MCF 10A (cell line): ENCODE measurements at regions of chr17 and their contacts with region 1.

Region 1: GRCh38 chr17:81034779-81035388 is at the start of gene BAIAP2:
- DNase-seq: peak; percentile 93
- H3K4me3 Mint-ChIP-seq: peak within 1 kb of the TSS; percentile 82
- H3K27ac Mint-ChIP-seq: peak within 1 kb of the TSS; percentile 79
- H3K4me1 Mint-ChIP-seq: peaks cover 36% of the 10 kb centered on the region
- H3K27me3 Mint-ChIP-seq: no peaks in the 10 kb centered on the region
- CTCF ChIP-seq: no peak
- total RNA-seq, gene BAIAP2: 46.4 and 67.0 TPM in 2 replicates

Region 2: GRCh38 chr17:81018044-81018802 is 16.7 kb before region 1 on chr17:
- CTCF ChIA-PET with region 1: interaction called, 20 read pairs
- POLR2A ChIA-PET with region 1: interaction called, 7 read pairs
- intact Hi-C with region 1: no loop called
- DNase-seq: no peak
- H3K4me3 Mint-ChIP-seq: no peak overlapping the region
- H3K27ac Mint-ChIP-seq: no peak overlapping the region
- H3K4me1 Mint-ChIP-seq: no peaks in the 10 kb centered on the region
- H3K27me3 Mint-ChIP-seq: no peaks in the 10 kb centered on the region
- CTCF ChIP-seq: no peak

Region 3: DNA sequence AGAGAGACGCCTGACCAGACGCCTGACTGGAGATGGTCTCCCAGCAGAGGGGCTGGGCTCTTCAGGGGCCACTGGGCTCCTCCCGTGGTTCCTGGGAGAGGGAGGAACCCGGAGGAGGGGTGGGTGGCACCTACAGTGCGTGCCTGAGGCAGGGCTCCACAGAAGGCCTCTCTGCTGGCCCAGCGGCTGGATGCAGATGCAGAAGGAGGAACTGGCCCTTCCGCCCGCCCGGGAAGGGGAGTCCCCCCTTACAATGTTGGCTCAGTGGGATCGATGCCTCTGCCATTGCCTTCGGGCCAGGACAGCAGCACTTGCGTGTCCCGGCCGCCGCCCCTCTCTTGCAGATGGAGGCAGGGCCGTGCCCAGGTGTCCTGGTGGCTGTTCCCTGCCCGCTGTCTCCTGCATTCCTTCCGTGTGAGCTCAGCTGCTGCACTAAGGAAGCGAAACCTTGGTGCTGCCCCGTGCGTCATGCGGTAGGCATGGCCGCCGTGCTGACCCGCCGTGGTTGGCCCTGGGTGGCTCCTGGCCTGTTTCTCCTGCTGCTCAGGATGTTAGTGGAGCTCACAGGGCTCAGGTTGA is 15.2 kb after region 1 on chr17:
- CTCF ChIA-PET with region 1: interaction called, 4 read pairs
- POLR2A ChIA-PET with region 1: interaction called, 60 read pairs
- intact Hi-C with region 1: loop called (anchors 2 kb)
- DNase-seq: peak; percentile 93
- H3K4me3 Mint-ChIP-seq: peak overlapping the region; percentile 68
- H3K27ac Mint-ChIP-seq: peak overlapping the region; percentile 98
- H3K4me1 Mint-ChIP-seq: peaks cover 34% of the 10 kb centered on the region
- H3K27me3 Mint-ChIP-seq: no peaks in the 10 kb centered on the region
- CTCF ChIP-seq: no peak

Region 4: DNA sequence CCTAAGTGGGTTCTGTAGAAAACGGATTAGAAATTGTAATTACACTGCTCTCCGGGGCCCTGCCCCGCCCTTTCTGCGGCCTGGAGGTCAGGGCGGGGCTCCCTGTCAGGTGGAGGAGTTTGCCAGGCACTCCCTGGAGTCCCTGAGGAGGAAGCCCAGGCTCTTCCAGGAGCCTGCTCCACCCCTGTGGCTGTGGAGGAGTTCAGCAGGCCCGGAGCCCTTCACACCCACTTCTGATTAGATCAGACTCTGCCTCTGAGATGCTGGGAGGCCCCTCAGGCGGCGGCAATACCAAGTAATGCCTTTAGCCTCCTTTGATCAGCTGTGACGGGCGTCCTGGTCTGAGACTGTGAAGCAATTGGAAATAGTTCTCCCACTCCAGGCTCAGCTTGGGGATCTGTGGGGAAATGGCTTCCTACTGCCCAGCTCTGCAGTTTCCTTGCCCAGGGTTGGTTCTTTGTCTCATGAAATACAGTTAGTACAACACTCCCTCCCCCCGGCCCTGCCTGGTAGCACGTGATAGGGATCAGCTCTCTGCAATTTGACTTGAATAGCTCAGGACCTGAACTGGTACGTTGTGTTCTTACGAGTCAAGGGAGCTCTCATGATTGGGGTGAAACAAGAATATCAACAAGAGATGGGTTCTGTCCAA is 22.3 kb after region 1 on chr17:
- CTCF ChIA-PET with region 1: interaction called, 8 read pairs
- POLR2A ChIA-PET with region 1: interaction called, 60 read pairs
- intact Hi-C with region 1: no loop called
- DNase-seq: peak; percentile 77
- H3K4me3 Mint-ChIP-seq: peak overlapping the region; percentile 67
- H3K27ac Mint-ChIP-seq: peak overlapping the region; percentile 94
- H3K4me1 Mint-ChIP-seq: peaks cover 22% of the 10 kb centered on the region
- H3K27me3 Mint-ChIP-seq: no peaks in the 10 kb centered on the region
- CTCF ChIP-seq: no peak

Region 5: DNA sequence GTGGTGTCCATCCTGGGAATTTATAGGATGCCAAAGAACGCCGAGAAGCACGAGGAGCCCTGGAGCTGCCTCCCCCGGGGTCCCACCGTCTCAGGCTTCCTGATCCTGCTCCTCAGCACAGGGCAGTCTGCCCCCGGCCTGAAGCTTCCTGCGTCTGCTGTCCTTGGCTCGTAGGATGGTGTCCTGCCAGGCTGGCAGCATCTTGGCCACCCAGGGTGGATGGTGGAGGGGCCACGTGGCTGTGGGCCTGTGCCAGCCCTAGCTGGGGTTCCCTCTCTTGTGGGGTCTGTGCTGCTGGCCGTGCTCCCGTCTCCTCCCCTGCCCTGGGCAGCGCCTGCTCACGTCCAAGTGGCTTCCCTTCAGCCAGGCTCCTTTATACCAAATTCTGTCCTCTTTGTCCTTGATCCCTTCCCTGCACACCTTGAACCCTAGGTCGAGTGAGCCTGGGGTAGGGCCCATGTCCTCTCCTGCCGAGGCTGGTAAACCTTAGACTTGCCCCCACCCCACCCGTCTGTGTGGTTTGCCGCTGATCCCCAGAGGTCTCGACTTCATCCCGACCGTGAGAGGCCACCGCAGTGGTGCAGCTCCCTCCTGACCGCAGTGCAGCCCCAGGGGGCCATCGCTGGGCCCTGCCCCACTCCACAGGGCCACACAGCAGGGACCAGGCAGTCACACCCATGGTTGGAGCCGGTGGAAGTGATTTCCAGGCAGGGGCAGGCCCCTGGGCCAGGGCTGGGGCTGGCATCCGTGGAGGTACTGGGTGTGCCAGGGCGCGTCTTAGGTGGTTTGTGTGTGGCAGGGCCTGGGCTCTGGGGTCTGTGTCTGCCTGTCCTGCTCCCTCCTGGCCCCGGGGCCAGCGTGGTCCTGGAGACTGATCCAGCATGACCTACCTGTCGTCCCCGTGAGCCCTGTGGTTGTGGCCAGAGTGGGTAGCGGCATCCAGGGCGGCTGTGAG is 46.6 kb after region 1 on chr17:
- CTCF ChIA-PET with region 1: no interaction called
- POLR2A ChIA-PET with region 1: no interaction called
- intact Hi-C with region 1: no loop called
- DNase-seq: no peak
- H3K4me3 Mint-ChIP-seq: no peak overlapping the region
- H3K27ac Mint-ChIP-seq: no peak overlapping the region
- H3K4me1 Mint-ChIP-seq: no peaks in the 10 kb centered on the region
- H3K27me3 Mint-ChIP-seq: no peaks in the 10 kb centered on the region
- CTCF ChIP-seq: no peak

Region 6: DNA sequence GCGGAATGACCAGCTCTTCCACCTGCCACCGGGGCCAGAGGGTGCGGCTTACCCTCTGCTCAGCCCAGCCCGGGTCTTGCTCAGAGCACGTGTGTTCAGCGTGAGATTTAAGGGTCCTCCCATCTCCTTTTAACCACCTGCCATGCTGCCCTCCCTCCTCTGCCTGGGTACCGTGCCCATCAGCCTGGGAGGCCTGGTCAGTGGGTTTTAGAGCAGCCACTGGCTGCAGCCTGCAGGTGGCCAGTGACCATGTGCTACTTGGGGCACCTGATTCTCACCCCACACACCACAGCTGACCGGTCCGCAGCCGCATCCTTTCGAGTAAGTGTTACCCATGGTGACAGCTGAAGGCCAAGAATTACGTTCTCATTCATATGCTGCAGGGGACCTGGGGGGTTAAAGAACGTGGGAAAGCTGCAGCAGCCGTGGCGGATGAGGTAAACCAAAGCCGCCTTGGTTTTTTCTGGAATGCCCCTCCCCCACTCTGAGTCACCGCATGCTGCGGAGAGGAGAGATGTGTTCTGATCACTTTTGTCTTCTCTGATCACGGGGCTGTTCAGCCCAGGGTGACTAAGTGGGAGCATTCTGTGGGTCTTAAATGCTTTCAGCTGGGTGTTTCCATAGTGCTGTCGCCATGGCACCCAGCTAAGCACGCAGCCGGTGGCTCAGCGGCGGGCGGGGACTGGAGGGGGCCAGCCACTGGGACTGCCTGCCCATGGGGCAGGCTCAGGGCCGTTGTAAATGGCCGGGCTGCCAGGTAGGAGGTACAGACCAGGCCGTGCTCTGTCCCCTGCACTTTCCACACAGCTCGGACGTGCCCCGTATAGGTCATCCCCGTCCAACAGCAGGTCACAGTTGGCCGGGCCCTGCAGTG is 59.9 kb after region 1 on chr17:
- CTCF ChIA-PET with region 1: interaction called, 7 read pairs
- POLR2A ChIA-PET with region 1: interaction called, 17 read pairs
- intact Hi-C with region 1: loop called (anchors 1 kb)
- DNase-seq: peak; percentile 98
- H3K4me3 Mint-ChIP-seq: no peak overlapping the region
- H3K27ac Mint-ChIP-seq: peak overlapping the region; percentile 88
- H3K4me1 Mint-ChIP-seq: peaks cover 43% of the 10 kb centered on the region
- H3K27me3 Mint-ChIP-seq: no peaks in the 10 kb centered on the region
- CTCF ChIP-seq: no peak

Region 7: GRCh38 chr17:81238817-81239600 is 204.1 kb after region 1 on chr17 and contains the starts of genes NDUFAF8 and TEPSIN:
- CTCF ChIA-PET with region 1: no interaction called
- POLR2A ChIA-PET with region 1: interaction called, 10 read pairs
- intact Hi-C with region 1: no loop called
- DNase-seq: peak; percentile 100
- H3K4me3 Mint-ChIP-seq: peak within 1 kb of the TSS; percentile 84
- H3K27ac Mint-ChIP-seq: peak within 1 kb of the TSS; percentile 87
- H3K4me1 Mint-ChIP-seq: peaks cover 24% of the 10 kb centered on the region
- H3K27me3 Mint-ChIP-seq: no peaks in the 10 kb centered on the region
- CTCF ChIP-seq: no peak
- total RNA-seq, gene NDUFAF8: 95.0 and 95.3 TPM in 2 replicates
- total RNA-seq, gene TEPSIN: 23.4 and 27.4 TPM in 2 replicates